SK-N-SH (cell line): ENCODE measurements at regions of chr19 and their contacts with region 1.

Region 1: GRCh38 chr19:34096020-34096915 is 76.0 kb upstream of the LSM14A start:
- DNase-seq: peak; percentile 72
- H3K4me3 ChIP-seq: peak overlapping the region; percentile 3 to 12; a peak in 2 of 4 replicates
- H3K27ac ChIP-seq: no peak overlapping the region
- H3K4me1 ChIP-seq: no peaks in the 10 kb centered on the region
- H3K27me3 ChIP-seq: no peaks in the 10 kb centered on the region
- CTCF ChIP-seq: peak; percentile 74
- EP300 ChIP-seq: no peak
- RAD21 ChIP-seq: peak; percentile 91

Region 2: GRCh38 chr19:33752018-33752800 is 344.1 kb before region 1 on chr19:
- CTCF ChIA-PET with region 1: interaction called, 10 read pairs
- POLR2A ChIA-PET with region 1: no interaction called
- DNase-seq: no peak
- H3K4me3 ChIP-seq: no peak overlapping the region
- H3K27ac ChIP-seq: no peak overlapping the region
- H3K4me1 ChIP-seq: peaks cover 0 to 26% of the 10 kb centered on the region in 2 experiments; a peak in 1 of 4 replicates
- H3K27me3 ChIP-seq: no peaks in the 10 kb centered on the region
- CTCF ChIP-seq: no peak
- EP300 ChIP-seq: no peak
- RAD21 ChIP-seq: no peak

Region 3: GRCh38 chr19:33795370-33796163 is 300.7 kb before region 1 on chr19:
- CTCF ChIA-PET with region 1: interaction called, 74 read pairs
- POLR2A ChIA-PET with region 1: interaction called, 9 read pairs
- DNase-seq: peak; percentile 96
- H3K4me3 ChIP-seq: peak overlapping the region; percentile 49 to 69
- H3K27ac ChIP-seq: peak overlapping the region; percentile 80 to 82
- H3K4me1 ChIP-seq: peaks cover 0 to 37% of the 10 kb centered on the region in 2 experiments; a peak in 2 of 4 replicates
- H3K27me3 ChIP-seq: no peaks in the 10 kb centered on the region
- CTCF ChIP-seq: peak; percentile 90; the same call in 1 of the 2 replicates
- EP300 ChIP-seq: no peak
- RAD21 ChIP-seq: peak; percentile 55; the same call in 1 of the 2 replicates

Region 4: DNA sequence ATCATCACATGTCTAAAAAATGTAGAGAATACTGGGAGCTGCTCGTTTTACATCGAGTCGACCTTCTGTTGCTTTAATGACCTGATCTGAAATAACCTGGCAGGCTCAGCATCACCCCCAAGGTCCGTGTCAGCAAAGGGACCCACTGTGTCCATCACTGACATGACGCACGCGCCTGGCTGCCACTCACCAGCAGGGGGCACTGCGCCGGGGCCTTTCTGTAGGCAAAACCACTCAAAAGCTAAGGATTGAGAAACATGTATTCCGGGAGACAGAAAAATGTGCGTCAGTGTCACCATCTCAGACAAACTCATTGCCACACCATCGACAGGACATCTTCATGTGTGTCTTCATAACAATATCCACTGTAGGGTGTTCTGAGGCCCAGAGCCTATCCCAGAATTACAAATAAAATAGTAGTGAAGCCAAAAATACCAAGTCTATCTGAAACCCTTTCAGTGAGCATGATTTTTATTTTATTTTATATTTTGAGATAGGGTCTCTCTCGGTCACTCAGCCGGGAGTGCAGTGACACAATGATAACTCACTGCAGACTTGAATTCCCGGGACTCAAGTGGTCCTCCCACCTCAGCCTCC is 54.2 kb before region 1 on chr19:
- CTCF ChIA-PET with region 1: interaction called, 36 read pairs
- POLR2A ChIA-PET with region 1: no interaction called
- DNase-seq: peak; percentile 71
- H3K4me3 ChIP-seq: no peak overlapping the region; a peak in 1 of 4 replicates
- H3K27ac ChIP-seq: no peak overlapping the region
- H3K4me1 ChIP-seq: no peaks in the 10 kb centered on the region
- H3K27me3 ChIP-seq: no peaks in the 10 kb centered on the region
- CTCF ChIP-seq: peak; percentile 85
- EP300 ChIP-seq: no peak
- RAD21 ChIP-seq: peak; percentile 58

Region 5: GRCh38 chr19:34082289-34083077 is 13.8 kb before region 1 on chr19:
- CTCF ChIA-PET with region 1: interaction called, 52 read pairs
- POLR2A ChIA-PET with region 1: interaction called, 4 read pairs
- DNase-seq: no peak
- H3K4me3 ChIP-seq: no peak overlapping the region
- H3K27ac ChIP-seq: no peak overlapping the region
- H3K4me1 ChIP-seq: no peaks in the 10 kb centered on the region
- H3K27me3 ChIP-seq: no peaks in the 10 kb centered on the region
- CTCF ChIP-seq: no peak
- EP300 ChIP-seq: no peak
- RAD21 ChIP-seq: no peak

Region 6: DNA sequence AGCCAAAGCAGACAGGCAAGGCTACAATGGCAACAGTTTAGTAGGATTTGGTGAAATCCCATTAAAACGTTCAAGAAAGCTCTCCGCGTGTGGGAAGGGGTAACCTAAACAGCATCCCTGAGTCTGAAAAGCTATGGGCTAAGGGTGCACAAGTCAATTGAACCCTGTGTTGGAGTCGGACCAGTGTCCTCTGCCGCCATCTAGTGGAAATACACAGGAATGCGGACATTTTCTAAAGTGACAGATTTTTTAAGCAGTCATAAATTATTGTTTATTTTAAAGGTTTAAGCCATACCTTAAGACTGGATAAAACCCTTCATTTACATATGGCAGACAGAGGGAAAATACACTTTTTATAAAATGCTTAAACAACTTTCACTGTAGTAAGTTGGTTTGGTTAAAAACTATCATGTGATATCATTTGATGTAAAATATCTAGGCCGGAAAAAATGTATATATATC is 49.5 kb after region 1 on chr19:
- CTCF ChIA-PET with region 1: interaction called, 19 read pairs
- POLR2A ChIA-PET with region 1: no interaction called
- DNase-seq: peak; percentile 74
- H3K4me3 ChIP-seq: no peak overlapping the region
- H3K27ac ChIP-seq: no peak overlapping the region
- H3K4me1 ChIP-seq: no peaks in the 10 kb centered on the region; a peak in 1 of 4 replicates
- H3K27me3 ChIP-seq: no peaks in the 10 kb centered on the region
- CTCF ChIP-seq: peak; percentile 94
- EP300 ChIP-seq: no peak
- RAD21 ChIP-seq: peak; percentile 90